ENCODE measurements at regions of chr12 and their contacts with region 1.

Region 1: GRCh38 chr12:53352331-53353256 is 16.4 kb upstream of the SP7 start:
- DNase-seq: peak; percentile 78
- CTCF ChIP-seq: peak; percentile 76

Region 2: GRCh38 chr12:53424626-53425514 is 72.3 kb after region 1 on chr12:
- in situ Hi-C with region 1: loop called (anchors 5 kb)
- DNase-seq: no peak
- CTCF ChIP-seq: no peak

Measured in GM13977 (cell line).